Ovary (tissue), 10 donors: ENCODE measurements at regions of chr14 and their contacts with region 1.

Region 1: DNA sequence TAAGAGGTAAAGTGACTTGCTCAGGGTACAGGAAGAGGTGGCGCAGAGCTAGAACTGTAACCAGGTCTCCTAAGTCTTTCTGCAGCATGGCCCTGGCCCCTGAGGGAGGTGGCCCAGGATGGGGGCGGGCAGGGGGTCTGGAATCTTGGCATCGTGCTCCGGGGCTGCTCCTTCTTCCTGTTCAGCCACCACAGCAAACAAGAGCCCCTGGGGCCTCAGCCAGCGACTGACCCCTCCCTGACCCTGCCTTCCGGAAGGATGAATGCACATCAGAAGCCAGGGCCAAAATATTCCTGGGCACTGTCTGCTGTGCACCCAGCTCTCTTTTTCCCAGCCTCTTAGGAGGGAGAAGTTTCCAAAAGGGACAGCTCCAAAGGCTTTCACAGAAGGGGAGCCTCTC is 242.8 kb downstream of the DPF3 start:
- DNase-seq: peak in 4 of 5 donors; percentile 36 to 66 (median 44)
- H3K4me3 ChIP-seq: no peak overlapping the region
- H3K27ac ChIP-seq: no peak overlapping the region
- H3K4me1 ChIP-seq: peaks cover 11% of the 10 kb centered on the region
- H3K27me3 ChIP-seq: no peaks in the 10 kb centered on the region
- CTCF ChIP-seq: no peak
- EP300 ChIP-seq: no peak
- POLR2A ChIP-seq: no peak

Region 2: GRCh38 chr14:71339650-71340415 is 1311.2 kb before region 1 on chr14:
- intact Hi-C with region 1: loop called in 1 of 4 experiments (anchors 5 kb)
- DNase-seq: no peak
- H3K4me3 ChIP-seq: no peak overlapping the region
- H3K27ac ChIP-seq: no peak overlapping the region
- H3K4me1 ChIP-seq: no peaks in the 10 kb centered on the region
- H3K27me3 ChIP-seq: no peaks in the 10 kb centered on the region
- CTCF ChIP-seq: no peak
- EP300 ChIP-seq: no peak
- POLR2A ChIP-seq: no peak

Region 3: GRCh38 chr14:72535485-72535884 is 115.6 kb before region 1 on chr14:
- intact Hi-C with region 1: loop called in 1 of 4 experiments (anchors 10 kb)
- DNase-seq: no peak
- H3K4me3 ChIP-seq: no peak overlapping the region
- H3K27ac ChIP-seq: no peak overlapping the region
- H3K4me1 ChIP-seq: peaks cover 5% of the 10 kb centered on the region
- H3K27me3 ChIP-seq: no peaks in the 10 kb centered on the region
- CTCF ChIP-seq: no peak
- EP300 ChIP-seq: no peak
- POLR2A ChIP-seq: no peak

Region 4: DNA sequence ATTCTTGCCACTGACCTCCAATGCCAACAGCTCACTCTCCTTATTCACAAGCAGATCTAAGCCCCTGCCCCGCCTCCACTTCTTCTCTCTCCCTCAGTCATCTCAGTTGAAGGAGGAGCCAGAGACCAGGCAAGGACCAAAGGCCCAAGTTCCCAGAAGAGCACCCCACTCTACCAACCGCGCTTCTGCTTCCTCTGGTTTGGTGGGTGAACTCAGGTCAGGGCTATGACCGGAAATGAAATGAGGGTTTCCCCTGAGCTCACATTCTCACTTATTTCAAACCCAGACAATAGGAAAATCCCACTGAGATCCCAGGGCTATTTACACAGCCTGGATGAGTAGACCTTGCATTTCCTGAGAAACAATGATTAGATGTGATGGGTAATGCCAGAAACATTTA is 232.9 kb after region 1 on chr14:
- intact Hi-C with region 1: loop called in 1 of 4 experiments (anchors 10 kb)
- DNase-seq: no peak
- H3K4me3 ChIP-seq: no peak overlapping the region
- H3K27ac ChIP-seq: no peak overlapping the region
- H3K4me1 ChIP-seq: peaks cover 4% of the 10 kb centered on the region
- H3K27me3 ChIP-seq: no peaks in the 10 kb centered on the region
- CTCF ChIP-seq: no peak
- EP300 ChIP-seq: no peak
- POLR2A ChIP-seq: no peak